Activated CD4-positive, alpha-beta memory T cell treated with anti-CD3 and anti-CD28 coated beads for 36 hours (primary cell): ENCODE measurements at regions of chr3 and their contacts with region 1.

Region 1: DNA sequence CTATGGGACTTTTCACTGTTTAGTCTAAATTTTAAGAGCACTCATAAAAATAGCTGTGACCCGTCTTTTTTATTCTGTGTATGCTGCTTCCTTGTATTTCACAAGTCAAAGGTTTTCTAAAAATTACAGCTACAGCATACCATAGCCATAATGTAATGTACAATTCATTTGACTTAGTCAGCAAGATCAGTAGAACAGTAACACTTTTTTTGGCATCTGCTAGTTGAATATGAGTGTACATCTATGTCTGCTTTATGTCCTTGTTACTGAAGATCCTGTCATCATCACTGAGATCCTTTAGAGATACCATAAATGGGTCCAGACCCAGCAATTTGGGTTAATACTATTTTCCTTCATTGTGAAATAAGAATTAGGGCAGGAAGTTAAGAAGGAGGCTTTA is 42.2 kb downstream of the CMSS1 start:
- DNase-seq: no peak
- H3K4me3 Mint-ChIP-seq: no peak overlapping the region
- H3K27ac Mint-ChIP-seq: no peak overlapping the region
- H3K4me1 Mint-ChIP-seq: peaks cover 22% of the 10 kb centered on the region
- H3K27me3 Mint-ChIP-seq: no peaks in the 10 kb centered on the region

Region 2: GRCh38 chr3:99817437-99818240 is 42.2 kb before region 1 on chr3 and contains the start of gene CMSS1:
- CTCF ChIA-PET with region 1: no interaction called
- POLR2A ChIA-PET with region 1: no interaction called
- intact Hi-C with region 1: loop called (anchors 1 kb)
- DNase-seq: peak; percentile 96
- H3K4me3 Mint-ChIP-seq: peak within 1 kb of the TSS; percentile 84
- H3K27ac Mint-ChIP-seq: peak within 1 kb of the TSS; percentile 92
- H3K4me1 Mint-ChIP-seq: peaks cover 35% of the 10 kb centered on the region
- H3K27me3 Mint-ChIP-seq: no peaks in the 10 kb centered on the region
- total RNA-seq, gene CMSS1: 95.6 to 97.2 TPM

Region 3: GRCh38 chr3:99825004-99825640 is 34.7 kb before region 1 on chr3:
- CTCF ChIA-PET with region 1: no interaction called
- POLR2A ChIA-PET with region 1: no interaction called
- intact Hi-C with region 1: loop called (anchors 1 kb)
- DNase-seq: no peak
- H3K4me3 Mint-ChIP-seq: no peak overlapping the region
- H3K27ac Mint-ChIP-seq: no peak overlapping the region
- H3K4me1 Mint-ChIP-seq: peaks cover 26% of the 10 kb centered on the region
- H3K27me3 Mint-ChIP-seq: no peaks in the 10 kb centered on the region

Region 4: GRCh38 chr3:99875929-99876841 is 16.4 kb after region 1 on chr3:
- CTCF ChIA-PET with region 1: interaction called, 3 read pairs
- POLR2A ChIA-PET with region 1: no interaction called
- intact Hi-C with region 1: loop called (anchors 1 kb)
- DNase-seq: peak; percentile 73
- H3K4me3 Mint-ChIP-seq: peak overlapping the region; percentile 65
- H3K27ac Mint-ChIP-seq: no peak overlapping the region
- H3K4me1 Mint-ChIP-seq: peaks cover 27% of the 10 kb centered on the region
- H3K27me3 Mint-ChIP-seq: peaks cover 2% of the 10 kb centered on the region

Region 5: GRCh38 chr3:99945328-99945995 is 85.6 kb after region 1 on chr3:
- CTCF ChIA-PET with region 1: no interaction called
- POLR2A ChIA-PET with region 1: no interaction called
- intact Hi-C with region 1: no loop called
- DNase-seq: no peak
- H3K4me3 Mint-ChIP-seq: no peak overlapping the region
- H3K27ac Mint-ChIP-seq: no peak overlapping the region
- H3K4me1 Mint-ChIP-seq: no peaks in the 10 kb centered on the region
- H3K27me3 Mint-ChIP-seq: no peaks in the 10 kb centered on the region

Region 6: DNA sequence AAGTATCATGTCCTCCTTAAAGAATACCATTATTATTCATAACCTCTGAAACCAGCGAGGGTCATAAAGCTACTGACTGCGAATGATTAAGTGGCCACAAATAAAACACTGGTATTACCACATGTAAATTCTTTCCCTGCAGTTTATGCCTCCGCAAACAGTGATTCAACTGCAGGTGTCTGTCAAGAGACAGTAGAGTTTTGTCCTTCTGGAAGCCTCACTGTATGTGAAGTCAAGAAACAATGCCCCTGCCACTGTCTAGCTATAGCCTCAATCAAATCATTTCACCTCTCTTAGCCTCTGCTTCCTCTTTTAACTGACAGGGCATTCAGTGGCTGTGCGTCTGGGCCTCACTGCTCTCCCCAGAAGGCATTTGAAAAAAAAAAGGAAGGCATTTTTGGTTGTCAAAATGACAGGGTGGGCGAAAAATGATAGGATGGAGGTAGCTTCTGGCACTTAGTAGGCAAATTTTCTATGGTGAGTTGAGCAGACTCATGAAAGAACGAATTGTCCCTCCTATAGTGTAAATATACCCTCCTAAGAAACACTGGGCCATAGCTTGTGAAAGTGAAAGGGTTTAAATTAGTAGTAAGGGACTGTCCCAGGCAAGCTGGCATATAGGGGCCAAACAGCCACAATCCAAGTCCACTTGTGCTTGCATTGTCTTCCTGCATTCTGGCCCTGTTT is 187.8 kb after region 1 on chr3:
- CTCF ChIA-PET with region 1: no interaction called
- POLR2A ChIA-PET with region 1: no interaction called
- intact Hi-C with region 1: loop called (anchors 1 kb)
- DNase-seq: no peak
- H3K4me3 Mint-ChIP-seq: no peak overlapping the region
- H3K27ac Mint-ChIP-seq: no peak overlapping the region
- H3K4me1 Mint-ChIP-seq: peaks cover 10% of the 10 kb centered on the region
- H3K27me3 Mint-ChIP-seq: no peaks in the 10 kb centered on the region